Activated CD4-positive, alpha-beta T cell treated with anti-CD3 and anti-CD28 coated beads for 36 hours (primary cell): ENCODE measurements at regions of chr2 and their contacts with region 1.

Region 1: DNA sequence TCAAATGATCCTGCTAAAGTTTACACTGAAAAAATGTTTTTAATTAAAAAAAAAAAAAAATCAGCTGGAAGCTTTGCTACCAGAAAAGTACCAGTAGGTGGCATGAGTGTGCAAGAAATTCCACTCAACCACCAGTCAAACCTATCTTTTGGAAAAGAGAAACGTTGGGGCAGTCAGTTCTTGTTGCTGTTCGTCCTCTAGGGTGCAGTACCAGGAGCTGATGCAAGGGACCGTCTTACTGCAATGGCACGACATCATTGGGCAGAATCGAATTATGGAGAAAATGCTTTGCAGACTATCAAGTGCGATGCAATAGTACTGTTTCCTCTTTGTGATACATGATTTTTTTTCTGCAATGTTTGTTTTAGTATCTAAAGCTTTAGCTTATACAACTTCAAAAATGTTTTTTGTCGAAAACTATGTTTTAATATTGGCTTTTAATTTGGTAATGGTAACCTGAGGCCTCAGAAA is 18.3 kb downstream of the YPEL5 start:
- DNase-seq: peak; percentile 77
- ATAC-seq: peak; percentile 100
- H3K4me3 Mint-ChIP-seq: no peak overlapping the region
- H3K27ac Mint-ChIP-seq: no peak overlapping the region
- H3K4me1 Mint-ChIP-seq: peaks cover 10% of the 10 kb centered on the region
- H3K27me3 Mint-ChIP-seq: no peaks in the 10 kb centered on the region

Region 2: DNA sequence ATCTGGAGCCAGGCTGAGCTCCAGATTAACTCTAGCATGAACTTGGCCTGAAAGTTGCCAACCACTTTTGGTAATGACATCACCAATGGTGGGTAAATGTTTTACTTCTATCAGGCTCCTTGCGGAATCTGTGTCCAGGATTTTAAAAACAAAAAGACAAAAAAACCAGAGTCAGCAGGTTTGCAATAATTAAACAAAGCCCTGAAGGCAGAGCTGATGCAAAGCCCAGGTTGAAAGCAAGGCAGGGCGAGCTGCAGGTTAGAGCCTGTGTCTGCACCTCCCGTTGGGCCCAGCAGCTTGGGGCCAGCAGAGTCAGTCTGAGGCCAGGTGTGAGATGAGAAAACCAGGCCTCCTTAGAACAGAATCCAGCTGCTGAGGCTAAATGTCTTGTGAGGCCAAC is 214.6 kb before region 1 on chr2:
- CTCF ChIA-PET with region 1: no interaction called
- POLR2A ChIA-PET with region 1: no interaction called
- intact Hi-C with region 1: no loop called
- DNase-seq: no peak
- ATAC-seq: no peak
- H3K4me3 Mint-ChIP-seq: no peak overlapping the region
- H3K27ac Mint-ChIP-seq: no peak overlapping the region
- H3K4me1 Mint-ChIP-seq: no peaks in the 10 kb centered on the region
- H3K27me3 Mint-ChIP-seq: peaks cover 16% of the 10 kb centered on the region

Region 3: DNA sequence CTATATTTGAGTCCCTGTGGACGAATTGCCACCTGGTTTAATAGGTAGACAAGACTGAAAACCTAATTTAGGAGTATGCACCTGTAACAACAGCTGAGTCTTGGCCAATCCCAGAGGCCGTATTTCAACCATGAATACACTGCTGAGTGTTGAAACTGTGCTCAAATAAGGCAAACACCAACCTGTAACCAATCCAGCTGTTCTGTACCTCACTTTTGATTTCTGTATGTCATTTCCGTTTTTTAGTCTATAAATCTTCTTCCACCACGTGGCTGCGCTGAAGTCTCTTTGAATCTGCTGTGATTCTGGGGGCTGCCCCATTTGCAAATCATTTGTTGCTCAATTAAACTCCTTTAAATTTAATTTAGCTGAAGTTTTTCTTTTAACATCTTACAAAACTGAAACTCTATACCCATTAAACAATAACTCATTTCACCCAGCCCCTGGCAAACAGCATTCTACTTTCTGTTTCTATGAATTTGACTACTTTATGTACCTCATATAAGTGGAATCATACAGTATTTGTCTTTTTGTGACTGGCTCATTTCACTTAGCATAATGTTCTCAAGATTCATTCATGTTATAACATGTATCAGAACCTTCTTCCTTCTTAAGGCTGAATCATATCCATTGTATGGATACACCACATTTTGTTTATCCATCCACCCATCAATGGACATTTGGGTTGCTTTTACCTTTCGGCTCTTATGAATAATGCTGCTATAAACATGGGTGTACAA is 25.8 kb before region 1 on chr2:
- CTCF ChIA-PET with region 1: interaction called, 18 read pairs
- POLR2A ChIA-PET with region 1: no interaction called
- intact Hi-C with region 1: no loop called
- DNase-seq: peak; percentile 66
- ATAC-seq: peak; percentile 87
- H3K4me3 Mint-ChIP-seq: peak overlapping the region; percentile 48
- H3K27ac Mint-ChIP-seq: peak overlapping the region; percentile 84
- H3K4me1 Mint-ChIP-seq: peaks cover 28% of the 10 kb centered on the region
- H3K27me3 Mint-ChIP-seq: no peaks in the 10 kb centered on the region

Region 4: GRCh38 chr2:30208452-30208851 is 43.4 kb after region 1 on chr2:
- CTCF ChIA-PET with region 1: interaction called, 61 read pairs
- POLR2A ChIA-PET with region 1: no interaction called
- intact Hi-C with region 1: loop called in 1 of 2 experiments (anchors 1 kb)
- DNase-seq: peak; percentile 62
- ATAC-seq: peak; percentile 74
- H3K4me3 Mint-ChIP-seq: no peak overlapping the region
- H3K27ac Mint-ChIP-seq: no peak overlapping the region
- H3K4me1 Mint-ChIP-seq: peaks cover 18% of the 10 kb centered on the region
- H3K27me3 Mint-ChIP-seq: no peaks in the 10 kb centered on the region

Region 5: GRCh38 chr2:30231212-30231995 is 66.3 kb after region 1 on chr2 and contains the start of gene LBH:
- CTCF ChIA-PET with region 1: interaction called, 15 read pairs
- POLR2A ChIA-PET with region 1: interaction called, 8 read pairs
- intact Hi-C with region 1: loop called in 1 of 2 experiments (anchors 2 kb)
- DNase-seq: peak; percentile 94
- ATAC-seq: peak; percentile 41
- H3K4me3 Mint-ChIP-seq: peak within 1 kb of the TSS; percentile 76
- H3K27ac Mint-ChIP-seq: peak within 1 kb of the TSS; percentile 93
- H3K4me1 Mint-ChIP-seq: peaks cover 65% of the 10 kb centered on the region
- H3K27me3 Mint-ChIP-seq: peaks cover 10% of the 10 kb centered on the region
- total RNA-seq, gene LBH: 89.6 to 108 TPM

Region 6: GRCh38 chr2:30686000-30686399 is 520.9 kb after region 1 on chr2:
- CTCF ChIA-PET with region 1: interaction called, 22 read pairs
- POLR2A ChIA-PET with region 1: no interaction called
- intact Hi-C with region 1: no loop called
- DNase-seq: peak; percentile 36
- ATAC-seq: peak; percentile 49
- H3K4me3 Mint-ChIP-seq: no peak overlapping the region
- H3K27ac Mint-ChIP-seq: no peak overlapping the region
- H3K4me1 Mint-ChIP-seq: no peaks in the 10 kb centered on the region
- H3K27me3 Mint-ChIP-seq: no peaks in the 10 kb centered on the region

Region 7: GRCh38 chr2:30826916-30827315 is 661.8 kb after region 1 on chr2:
- CTCF ChIA-PET with region 1: no interaction called
- POLR2A ChIA-PET with region 1: no interaction called
- intact Hi-C with region 1: no loop called
- DNase-seq: no peak
- ATAC-seq: no peak
- H3K4me3 Mint-ChIP-seq: no peak overlapping the region
- H3K27ac Mint-ChIP-seq: no peak overlapping the region
- H3K4me1 Mint-ChIP-seq: no peaks in the 10 kb centered on the region
- H3K27me3 Mint-ChIP-seq: peaks cover 1% of the 10 kb centered on the region

Region 8: GRCh38 chr2:31333527-31334183 is 1168.6 kb after region 1 on chr2:
- CTCF ChIA-PET with region 1: interaction called, 4 read pairs
- POLR2A ChIA-PET with region 1: no interaction called
- intact Hi-C with region 1: loop called in 1 of 2 experiments (anchors 10 kb)
- DNase-seq: peak; percentile 87
- ATAC-seq: peak; percentile 93
- H3K4me3 Mint-ChIP-seq: no peak overlapping the region
- H3K27ac Mint-ChIP-seq: no peak overlapping the region
- H3K4me1 Mint-ChIP-seq: no peaks in the 10 kb centered on the region
- H3K27me3 Mint-ChIP-seq: no peaks in the 10 kb centered on the region